Right lobe of liver (tissue), 6 donors: ENCODE measurements at regions of chr14 and their contacts with region 1.

Region 1: DNA sequence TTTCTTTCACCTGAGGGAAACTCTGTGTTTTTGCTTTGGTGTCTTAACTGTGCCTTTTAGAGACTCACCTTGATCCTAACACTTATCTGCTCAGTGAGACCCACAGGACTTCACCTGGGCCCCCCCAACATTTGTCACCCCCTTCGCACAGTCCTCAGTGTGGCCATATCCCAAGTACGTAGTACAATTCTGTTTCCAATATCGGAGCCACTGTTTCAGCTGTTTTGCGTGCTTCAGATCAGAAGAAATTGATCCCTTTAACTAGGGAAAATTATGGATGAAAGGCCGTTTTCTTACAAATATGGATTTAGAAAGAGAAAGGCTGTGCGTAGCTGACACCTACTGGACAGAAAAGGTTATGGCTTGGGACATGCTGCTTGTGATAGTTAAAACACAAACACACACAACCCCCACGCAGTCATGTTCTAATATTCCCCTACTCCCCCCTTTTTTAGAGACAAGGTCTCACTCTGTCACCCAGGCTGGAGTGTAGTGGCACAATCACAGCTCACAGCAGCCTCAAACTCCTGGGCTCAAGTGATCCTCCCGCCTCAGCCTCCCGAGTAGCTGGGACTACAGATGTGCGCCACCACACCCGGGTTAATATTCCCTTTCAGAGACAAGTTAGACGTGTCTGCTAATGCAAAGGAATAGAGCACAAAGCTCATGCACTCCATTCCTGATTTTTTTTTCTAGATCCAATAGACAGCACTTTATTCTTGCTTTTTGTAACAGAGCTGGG is 3.6 kb upstream of the SLC7A8 start:
- DNase-seq: no peak
- ATAC-seq: peak; percentile 66 to 74 (median 72)
- H3K4me3 ChIP-seq: no peak overlapping the region
- H3K27ac ChIP-seq: no peak overlapping the region
- H3K4me1 ChIP-seq: peaks cover 0 to 14% (median 0%) of the 10 kb centered on the region in 4 donors
- H3K27me3 ChIP-seq: no peaks in the 10 kb centered on the region
- CTCF ChIP-seq: peak; percentile 72 to 87 (median 76)
- POLR2A ChIP-seq: no peak

Region 2: GRCh38 chr14:23114669-23115491 is 72.2 kb before region 1 on chr14:
- intact Hi-C with region 1: loop called in 1 of 2 experiments (anchors 5 kb)
- DNase-seq: no peak
- ATAC-seq: peak in 1 of 4 donors; percentile 57
- H3K4me3 ChIP-seq: no peak overlapping the region
- H3K27ac ChIP-seq: no peak overlapping the region
- H3K4me1 ChIP-seq: no peaks in the 10 kb centered on the region
- H3K27me3 ChIP-seq: no peaks in the 10 kb centered on the region
- CTCF ChIP-seq: no peak
- POLR2A ChIP-seq: no peak

Region 3: GRCh38 chr14:23125933-23126524 is 61.1 kb before region 1 on chr14:
- intact Hi-C with region 1: loop called in 1 of 2 experiments (anchors 5 kb)
- DNase-seq: no peak
- ATAC-seq: no peak
- H3K4me3 ChIP-seq: no peak overlapping the region
- H3K27ac ChIP-seq: no peak overlapping the region
- H3K4me1 ChIP-seq: no peaks in the 10 kb centered on the region
- H3K27me3 ChIP-seq: no peaks in the 10 kb centered on the region
- CTCF ChIP-seq: no peak
- POLR2A ChIP-seq: no peak

Region 4: DNA sequence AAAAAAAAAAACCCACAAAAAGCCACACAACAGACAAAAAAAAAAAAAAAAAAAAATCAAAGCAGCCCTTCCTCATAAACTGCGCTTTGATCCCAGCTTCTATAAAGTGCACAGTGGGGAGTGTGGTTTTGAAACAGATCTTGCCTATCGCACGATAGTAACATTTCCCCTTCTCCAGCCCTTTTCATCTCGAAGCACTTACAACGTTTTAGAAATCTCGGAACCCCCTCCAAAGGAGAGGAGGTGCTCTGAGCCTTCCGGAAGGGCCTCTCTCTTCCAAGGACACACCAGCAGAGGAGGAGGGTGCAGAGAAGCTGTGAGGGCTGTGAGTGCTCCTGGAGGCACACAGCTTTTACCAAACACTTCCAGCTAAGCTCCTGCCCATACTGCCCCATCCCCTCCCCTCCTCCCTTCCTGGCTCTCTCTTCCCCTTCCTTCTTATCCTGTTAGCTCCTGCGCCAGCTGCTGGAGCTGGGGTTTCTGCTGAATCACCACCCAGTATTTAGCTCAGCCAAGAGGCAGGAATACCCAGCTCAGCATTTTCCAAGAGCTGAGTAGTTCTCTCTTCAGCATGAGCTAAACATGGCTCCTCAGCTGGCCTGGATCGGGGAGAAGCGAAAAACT is 32.0 kb before region 1 on chr14:
- intact Hi-C with region 1: no loop called
- DNase-seq: peak in 1 of 3 donors; percentile 41
- ATAC-seq: peak; percentile 65 to 72 (median 69)
- H3K4me3 ChIP-seq: no peak overlapping the region
- H3K27ac ChIP-seq: peak overlapping the region in 2 of 3 donors; percentile 3 to 39
- H3K4me1 ChIP-seq: no peaks in the 10 kb centered on the region
- H3K27me3 ChIP-seq: no peaks in the 10 kb centered on the region
- CTCF ChIP-seq: no peak
- POLR2A ChIP-seq: no peak

Region 5: GRCh38 chr14:23352511-23353432 is 165.7 kb after region 1 on chr14 and contains the start of gene SLC22A17:
- intact Hi-C with region 1: no loop called
- DNase-seq: peak; percentile 52 to 60 (median 59)
- ATAC-seq: peak; percentile 80 to 91 (median 83)
- H3K4me3 ChIP-seq: peak within 1 kb of the TSS; percentile 37 to 55 (median 43)
- H3K27ac ChIP-seq: no peak within 1 kb of the TSS
- H3K4me1 ChIP-seq: peaks cover 0 to 6% (median 0%) of the 10 kb centered on the region in 4 donors
- H3K27me3 ChIP-seq: peaks cover 0 to 7% of the 10 kb centered on the region in 2 donors
- CTCF ChIP-seq: peak in 1 of 4 donors; percentile 10
- POLR2A ChIP-seq: peak; percentile 22
- total RNA-seq, gene SLC22A17: 1.5 to 2.7 (median 2.1) TPM